ENCODE measurements at regions of chr11 and their contacts with region 1.

Region 1: GRCh38 chr11:62108017-62108750 is 15.6 kb upstream of the INCENP start:
- DNase-seq: no peak
- H3K4me3 Mint-ChIP-seq: no peak overlapping the region
- H3K27ac Mint-ChIP-seq: no peak overlapping the region
- H3K4me1 Mint-ChIP-seq: peaks cover 12% of the 10 kb centered on the region
- H3K27me3 Mint-ChIP-seq: no peaks in the 10 kb centered on the region

Region 2: DNA sequence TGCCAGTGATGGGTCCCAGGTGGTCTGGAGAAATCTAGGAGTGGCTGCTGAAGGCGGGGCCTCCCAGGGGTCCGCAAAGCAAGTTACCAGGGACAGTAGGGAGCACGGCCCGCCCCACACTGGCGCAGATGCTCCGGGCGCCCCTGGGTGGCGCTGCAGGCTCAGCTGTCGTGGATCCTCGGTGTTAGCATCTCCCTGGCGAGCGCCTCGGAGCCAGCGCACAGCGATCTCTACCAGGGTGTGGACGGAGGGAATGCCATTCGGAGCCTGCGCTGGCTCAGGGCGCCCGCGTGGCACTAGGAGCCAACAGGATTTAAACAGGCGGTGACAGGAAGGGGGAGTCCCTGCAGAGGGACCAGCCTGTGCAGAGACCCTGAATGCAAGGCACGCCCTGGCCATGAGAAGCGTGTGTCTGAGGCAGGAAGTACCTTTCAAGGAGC is 237.0 kb before region 1 on chr11:
- intact Hi-C with region 1: loop called (anchors 1 kb)
- DNase-seq: peak; percentile 61
- H3K4me3 Mint-ChIP-seq: peak overlapping the region; percentile 67
- H3K27ac Mint-ChIP-seq: no peak overlapping the region
- H3K4me1 Mint-ChIP-seq: peaks cover 4% of the 10 kb centered on the region
- H3K27me3 Mint-ChIP-seq: no peaks in the 10 kb centered on the region

Region 3: DNA sequence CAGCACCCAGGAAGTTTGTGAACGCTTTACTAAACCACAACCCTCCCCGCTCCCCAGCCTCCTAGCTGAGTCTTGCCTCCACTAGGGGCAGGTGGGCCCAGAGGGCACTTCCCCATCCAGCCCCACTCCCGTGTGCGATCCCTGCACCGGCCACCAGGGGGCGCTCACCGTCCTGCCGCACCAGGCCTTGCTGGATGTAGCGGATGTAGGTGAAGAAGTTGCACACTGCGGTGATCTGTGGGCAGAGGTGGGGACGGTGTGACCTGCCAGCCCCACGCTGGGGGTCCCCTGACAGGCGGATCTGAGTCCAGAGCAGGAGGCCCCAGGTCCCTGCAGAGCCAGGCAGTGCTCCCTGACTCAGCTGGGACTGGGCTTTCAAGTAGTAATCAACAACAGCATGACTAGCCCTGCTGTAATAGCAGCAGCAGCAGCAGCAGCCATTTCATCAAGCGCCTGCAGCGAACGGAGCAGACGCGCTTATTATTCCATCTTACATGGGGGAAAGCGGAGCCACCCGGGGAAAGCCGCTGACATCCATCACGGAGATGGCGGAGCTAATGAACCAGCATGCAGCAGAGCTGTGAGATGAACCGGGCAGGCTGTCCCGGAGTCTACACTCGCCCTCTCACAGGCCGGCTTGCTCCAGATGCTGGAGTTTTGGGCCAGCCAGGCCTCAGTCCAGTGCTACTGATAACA is 208.9 kb before region 1 on chr11:
- intact Hi-C with region 1: loop called (anchors 2 kb)
- DNase-seq: peak; percentile 88
- H3K4me3 Mint-ChIP-seq: no peak overlapping the region
- H3K27ac Mint-ChIP-seq: peak overlapping the region; percentile 6
- H3K4me1 Mint-ChIP-seq: peaks cover 5% of the 10 kb centered on the region
- H3K27me3 Mint-ChIP-seq: peaks cover 2% of the 10 kb centered on the region

Region 4: DNA sequence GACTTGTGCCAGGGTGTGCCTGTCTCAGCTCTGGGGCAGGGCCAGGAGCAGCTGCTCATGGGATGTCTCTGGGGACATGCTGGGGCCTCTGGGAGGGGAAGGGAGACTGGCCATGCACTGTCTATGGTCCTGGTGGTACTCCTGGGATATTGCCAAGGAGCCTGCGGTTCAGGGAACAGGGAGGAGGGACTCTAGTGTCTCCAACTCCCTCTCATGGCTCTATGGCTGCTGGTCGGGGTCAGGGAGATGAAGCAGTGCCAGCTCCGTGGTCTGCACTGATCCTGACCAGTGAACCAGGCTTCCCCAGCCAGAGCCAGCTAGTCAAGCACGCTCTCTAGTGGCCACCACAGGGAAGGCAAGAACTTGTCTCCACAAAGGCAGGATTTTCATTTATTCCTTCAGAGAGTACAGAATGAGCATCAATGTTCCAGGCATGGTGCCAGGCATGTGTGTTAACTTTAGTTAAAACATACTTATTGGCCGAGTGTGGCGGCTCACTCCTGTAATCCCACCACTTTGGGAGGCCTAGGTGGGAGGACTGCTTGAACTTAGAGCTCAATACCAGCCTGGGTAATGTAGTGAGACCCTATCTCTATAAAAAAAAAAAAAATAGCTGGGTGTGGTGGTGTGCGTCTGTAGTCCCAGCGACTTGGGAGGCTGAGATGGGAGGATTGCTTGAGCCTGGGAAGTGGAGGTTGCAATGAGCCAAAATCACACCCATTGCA is 160.5 kb before region 1 on chr11:
- intact Hi-C with region 1: loop called (anchors 5 kb)
- DNase-seq: peak; percentile 49
- H3K4me3 Mint-ChIP-seq: no peak overlapping the region
- H3K27ac Mint-ChIP-seq: no peak overlapping the region
- H3K4me1 Mint-ChIP-seq: no peaks in the 10 kb centered on the region
- H3K27me3 Mint-ChIP-seq: peaks cover 4% of the 10 kb centered on the region

Region 5: DNA sequence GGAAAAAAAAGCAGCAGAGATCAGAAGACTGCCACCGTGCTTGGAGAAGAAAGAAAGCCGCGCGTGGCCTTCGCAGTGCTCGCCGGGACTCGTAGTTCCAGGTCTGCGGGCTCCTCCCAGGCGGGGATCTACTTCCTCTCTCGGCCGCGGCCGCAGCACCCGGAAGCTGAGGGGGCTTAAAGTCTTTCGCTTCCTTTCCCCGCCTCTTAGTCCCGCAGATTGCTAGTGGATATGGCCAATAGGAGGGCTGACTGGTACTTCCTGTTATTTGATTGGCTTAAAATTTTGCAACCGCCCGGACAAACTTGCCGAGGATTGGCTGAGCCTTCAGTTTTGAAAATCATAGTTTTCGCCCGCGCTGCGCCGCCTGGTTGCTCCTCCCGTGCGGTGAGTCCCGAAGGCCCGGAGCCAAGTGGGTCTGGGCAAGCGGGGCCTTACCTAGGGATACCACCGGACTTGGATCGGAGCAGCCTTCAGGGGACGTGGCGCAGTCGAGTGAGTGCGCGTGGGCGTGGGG is 15.5 kb after region 1 on chr11 and contains the start of gene INCENP:
- intact Hi-C with region 1: loop called (anchors 1 kb)
- DNase-seq: peak; percentile 95
- H3K4me3 Mint-ChIP-seq: peak within 1 kb of the TSS; percentile 96
- H3K27ac Mint-ChIP-seq: peak within 1 kb of the TSS; percentile 90
- H3K4me1 Mint-ChIP-seq: peaks cover 29% of the 10 kb centered on the region
- H3K27me3 Mint-ChIP-seq: peaks cover 7% of the 10 kb centered on the region
- total RNA-seq, gene INCENP: 105 and 108 TPM in 2 replicates

Region 6: DNA sequence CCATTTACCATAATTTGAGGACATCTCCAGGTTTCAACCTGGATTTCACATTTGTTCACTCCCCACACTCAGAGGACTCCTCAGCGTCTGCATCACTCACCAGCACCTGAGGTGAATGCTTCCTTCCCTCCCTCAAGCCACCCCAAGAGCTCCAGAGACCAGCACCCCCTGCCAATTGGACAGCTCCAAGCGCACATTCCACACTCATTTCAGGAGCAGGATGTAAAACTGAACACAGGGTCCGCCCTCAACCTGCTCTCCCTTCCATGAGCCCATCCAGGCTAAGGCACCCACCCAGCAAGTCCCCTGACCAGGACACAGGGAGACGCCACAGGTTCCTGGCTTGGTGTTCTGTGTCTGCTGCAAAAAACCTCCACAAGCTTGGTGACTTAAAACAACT is 85.8 kb after region 1 on chr11:
- intact Hi-C with region 1: no loop called
- DNase-seq: no peak
- H3K4me3 Mint-ChIP-seq: no peak overlapping the region
- H3K27ac Mint-ChIP-seq: no peak overlapping the region
- H3K4me1 Mint-ChIP-seq: no peaks in the 10 kb centered on the region
- H3K27me3 Mint-ChIP-seq: peaks cover 24% of the 10 kb centered on the region